ENCODE measurements at regions of chr10 and their contacts with region 1.

Region 1: GRCh38 chr10:34758447-34758996 is 56.6 kb downstream of the PARD3 start:
- DNase-seq: peak; percentile 52 to 94
- H3K4me3 ChIP-seq: no peak overlapping the region
- H3K27ac ChIP-seq: peak overlapping the region; percentile 82
- H3K4me1 ChIP-seq: peaks cover 20% of the 10 kb centered on the region
- H3K27me3 ChIP-seq: no peaks in the 10 kb centered on the region
- CTCF ChIP-seq: no peak

Region 2: DNA sequence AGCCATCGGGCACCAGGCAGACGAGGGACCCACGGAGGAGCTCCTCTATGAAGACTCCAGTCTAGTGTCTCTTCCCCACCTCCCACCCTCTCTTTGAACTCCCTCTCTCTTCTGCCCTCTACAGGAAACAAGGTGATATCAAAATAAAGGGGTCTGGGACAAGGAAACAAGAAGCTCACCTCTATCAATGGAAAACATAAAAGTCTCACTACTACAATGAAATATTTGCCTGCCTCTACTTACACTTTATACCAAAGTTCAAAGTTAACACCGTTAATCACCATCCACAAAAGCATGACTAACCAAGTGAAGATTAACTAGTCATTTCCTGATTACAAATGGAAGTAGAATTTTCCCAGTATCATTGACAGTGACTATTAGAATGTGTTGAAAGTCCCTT is 25.6 kb before region 1 on chr10:
- CTCF ChIA-PET with region 1: interaction called, 7 read pairs
- POLR2A ChIA-PET with region 1: no interaction called
- intact Hi-C with region 1: loop called (anchors 1 kb)
- DNase-seq: peak in 1 of 2 experiments; percentile 56
- H3K4me3 ChIP-seq: no peak overlapping the region
- H3K27ac ChIP-seq: peak overlapping the region; percentile 79
- H3K4me1 ChIP-seq: peaks cover 45% of the 10 kb centered on the region
- H3K27me3 ChIP-seq: no peaks in the 10 kb centered on the region
- CTCF ChIP-seq: no peak; the same call in 1 of the 2 replicates

Region 3: DNA sequence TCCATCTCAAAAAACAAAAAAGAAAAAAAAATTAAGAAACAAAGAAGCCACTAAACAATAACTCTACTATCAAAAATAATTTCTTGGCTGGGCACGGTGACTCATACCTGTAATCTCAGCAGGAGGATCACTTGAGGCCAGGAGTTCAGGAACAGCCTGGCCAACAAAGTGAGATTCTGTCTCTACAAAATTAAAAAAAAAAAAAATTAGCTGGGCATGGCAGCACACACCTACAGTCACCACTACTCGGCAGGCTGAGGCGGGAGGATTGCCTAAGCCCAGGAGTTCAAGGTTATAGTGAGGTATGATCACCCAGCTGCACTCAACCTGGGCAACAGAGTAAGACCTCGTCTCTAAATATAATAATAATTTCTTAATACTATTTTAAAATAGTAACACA is 12.4 kb before region 1 on chr10:
- CTCF ChIA-PET with region 1: no interaction called
- POLR2A ChIA-PET with region 1: no interaction called
- intact Hi-C with region 1: no loop called
- DNase-seq: peak in 1 of 2 experiments; percentile 20
- H3K4me3 ChIP-seq: no peak overlapping the region
- H3K27ac ChIP-seq: no peak overlapping the region
- H3K4me1 ChIP-seq: no peaks in the 10 kb centered on the region
- H3K27me3 ChIP-seq: no peaks in the 10 kb centered on the region
- CTCF ChIP-seq: no peak

Region 4: GRCh38 chr10:34801097-34801733 is 42.7 kb after region 1 on chr10:
- CTCF ChIA-PET with region 1: no interaction called
- POLR2A ChIA-PET with region 1: no interaction called
- intact Hi-C with region 1: no loop called
- DNase-seq: no peak
- H3K4me3 ChIP-seq: no peak overlapping the region
- H3K27ac ChIP-seq: no peak overlapping the region
- H3K4me1 ChIP-seq: no peaks in the 10 kb centered on the region
- H3K27me3 ChIP-seq: no peaks in the 10 kb centered on the region
- CTCF ChIP-seq: no peak

Region 5: DNA sequence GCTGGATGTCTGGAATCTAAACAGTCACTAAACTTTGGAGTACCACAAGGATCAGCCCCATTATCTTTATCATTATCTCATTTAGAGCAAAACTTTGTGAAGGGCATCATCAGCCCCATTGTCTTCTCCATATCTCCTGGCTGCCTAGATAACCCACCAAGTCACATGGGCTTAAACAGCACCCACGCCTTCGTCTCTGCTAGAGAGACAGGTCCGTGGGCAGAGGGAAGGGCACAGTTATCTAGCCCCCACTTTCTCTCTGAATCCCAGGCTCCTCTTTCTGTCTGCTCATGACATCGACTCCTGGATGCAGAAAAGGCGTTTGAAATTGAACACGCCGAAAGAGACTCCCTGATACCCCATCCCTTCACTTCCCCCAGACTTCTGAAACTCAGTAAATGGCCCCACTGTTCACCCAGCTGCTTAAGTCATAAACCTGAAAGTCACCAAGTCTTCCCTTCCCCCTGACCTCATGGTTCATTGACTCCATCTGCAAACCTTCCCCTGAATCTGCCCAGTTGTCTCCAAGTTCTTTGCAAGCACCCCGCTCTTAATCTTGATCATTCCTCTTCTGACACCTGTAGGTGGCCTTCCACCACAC is 77.5 kb after region 1 on chr10:
- CTCF ChIA-PET with region 1: no interaction called
- POLR2A ChIA-PET with region 1: no interaction called
- intact Hi-C with region 1: no loop called
- DNase-seq: no peak
- H3K4me3 ChIP-seq: no peak overlapping the region
- H3K27ac ChIP-seq: no peak overlapping the region
- H3K4me1 ChIP-seq: no peaks in the 10 kb centered on the region
- H3K27me3 ChIP-seq: no peaks in the 10 kb centered on the region
- CTCF ChIP-seq: no peak

Region 6: DNA sequence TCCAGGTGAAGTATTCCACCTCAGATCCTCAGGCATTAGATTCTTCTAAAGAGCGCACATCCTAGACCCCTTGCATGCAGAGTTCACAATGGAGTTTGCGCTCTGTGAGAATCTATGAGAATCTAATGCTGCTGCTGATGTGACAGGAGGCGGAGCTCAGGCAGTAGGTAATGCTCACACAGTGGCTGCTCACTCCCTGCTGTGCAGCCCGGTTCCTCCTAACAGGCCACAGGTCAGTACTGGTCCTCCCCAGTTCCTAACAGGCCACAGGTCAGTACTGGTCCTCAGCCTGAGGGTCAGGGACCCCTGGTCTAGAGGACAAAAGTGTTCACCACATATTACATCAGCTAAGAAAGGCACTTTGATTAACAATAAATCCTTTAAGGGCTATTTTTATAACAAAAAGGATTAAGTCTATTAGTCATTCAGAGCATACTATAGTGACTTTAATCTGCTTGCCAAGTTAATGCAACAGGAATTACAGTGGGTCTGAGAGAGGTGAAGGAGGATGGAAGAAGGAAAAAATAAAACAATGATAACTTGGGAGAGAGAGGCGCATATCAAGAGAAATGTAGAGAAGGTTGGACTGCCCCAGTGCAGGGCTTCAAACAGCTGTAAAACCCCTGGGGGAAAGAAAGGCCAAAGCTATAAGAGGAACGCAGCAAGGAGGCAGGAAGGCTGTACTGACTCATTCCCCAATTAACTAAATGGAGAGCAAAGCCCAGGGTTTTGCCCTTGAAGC is 282.4 kb after region 1 on chr10:
- CTCF ChIA-PET with region 1: no interaction called
- POLR2A ChIA-PET with region 1: no interaction called
- intact Hi-C with region 1: no loop called
- DNase-seq: no peak
- H3K4me3 ChIP-seq: no peak overlapping the region
- H3K27ac ChIP-seq: no peak overlapping the region
- H3K4me1 ChIP-seq: peaks cover 9% of the 10 kb centered on the region
- H3K27me3 ChIP-seq: no peaks in the 10 kb centered on the region
- CTCF ChIP-seq: no peak

Measured in PC-9 (cell line).